H1 (cell line): ENCODE measurements at regions of chr6 and their contacts with region 1.

Region 1: GRCh38 chr6:10451828-10452509 is 37.1 kb upstream of the TFAP2A start:
- DNase-seq: no peak
- H3K4me3 ChIP-seq: no peak overlapping the region
- H3K27ac ChIP-seq: no peak overlapping the region
- H3K4me1 ChIP-seq: no peaks in the 10 kb centered on the region; a peak in 1 of 7 replicates
- H3K27me3 ChIP-seq: no peaks in the 10 kb centered on the region
- CTCF ChIP-seq: no peak
- EP300 ChIP-seq: no peak
- POLR2A ChIP-seq: no peak
- RAD21 ChIP-seq: no peak

Region 2: GRCh38 chr6:10465629-10466504 is 13.9 kb after region 1 on chr6:
- CTCF ChIA-PET with region 1: interaction called, 16 read pairs
- POLR2A ChIA-PET with region 1: interaction called, 4 read pairs
- DNase-seq: peak in 1 of 2 experiments; percentile 85
- H3K4me3 ChIP-seq: no peak overlapping the region
- H3K27ac ChIP-seq: no peak overlapping the region
- H3K4me1 ChIP-seq: peaks cover 0 to 5% (median 4%) of the 10 kb centered on the region in 4 experiments; a peak in 5 of 7 replicates
- H3K27me3 ChIP-seq: no peaks in the 10 kb centered on the region
- CTCF ChIP-seq: peak; percentile 64 to 77 (median 71)
- EP300 ChIP-seq: no peak
- POLR2A ChIP-seq: no peak
- RAD21 ChIP-seq: peak; percentile 51 to 56